ENCODE measurements at regions of chr6 and their contacts with region 1.

Region 1: GRCh38 chr6:33454009-33454946 is at the start of gene ZBTB9:
- DNase-seq: peak; percentile 99
- H3K4me3 Mint-ChIP-seq: peak within 1 kb of the TSS; percentile 97
- H3K27ac Mint-ChIP-seq: peak within 1 kb of the TSS; percentile 88
- H3K4me1 Mint-ChIP-seq: peaks cover 20% of the 10 kb centered on the region
- H3K27me3 Mint-ChIP-seq: no peaks in the 10 kb centered on the region
- total RNA-seq, gene ZBTB9: 14.2 and 14.5 TPM in 2 replicates

Region 2: DNA sequence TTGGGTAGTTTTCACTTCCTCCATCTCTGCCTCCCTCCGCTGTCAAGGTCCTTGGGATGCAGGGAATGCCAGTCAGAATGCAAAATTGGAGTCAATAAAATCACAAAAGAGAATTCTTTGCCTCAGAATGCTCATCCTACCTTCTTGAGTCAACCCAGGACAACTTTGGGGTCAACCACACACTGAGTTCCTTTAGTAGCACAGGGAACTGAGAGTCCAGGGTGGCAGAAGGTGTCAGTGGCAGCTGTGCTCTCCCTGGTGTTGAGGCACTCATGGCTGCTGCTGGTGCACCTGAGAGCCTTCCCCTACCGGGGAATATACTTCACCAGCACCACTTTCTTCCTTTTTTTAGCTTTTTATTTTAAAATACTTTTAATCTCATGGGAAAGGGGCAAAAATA is 1229.6 kb before region 1 on chr6:
- intact Hi-C with region 1: no loop called
- DNase-seq: no peak
- H3K4me3 Mint-ChIP-seq: no peak overlapping the region
- H3K27ac Mint-ChIP-seq: no peak overlapping the region
- H3K4me1 Mint-ChIP-seq: peaks cover 8% of the 10 kb centered on the region
- H3K27me3 Mint-ChIP-seq: peaks cover 1% of the 10 kb centered on the region

Region 3: GRCh38 chr6:33391278-33391921 is 62.9 kb before region 1 on chr6 and contains the start of gene KIFC1:
- intact Hi-C with region 1: loop called (anchors 1 kb)
- DNase-seq: peak; percentile 100
- H3K4me3 Mint-ChIP-seq: peak within 1 kb of the TSS; percentile 89
- H3K27ac Mint-ChIP-seq: peak within 1 kb of the TSS; percentile 97
- H3K4me1 Mint-ChIP-seq: peaks cover 42% of the 10 kb centered on the region
- H3K27me3 Mint-ChIP-seq: peaks cover 2% of the 10 kb centered on the region
- total RNA-seq, gene KIFC1: 64.9 and 66.5 TPM in 2 replicates

Region 4: DNA sequence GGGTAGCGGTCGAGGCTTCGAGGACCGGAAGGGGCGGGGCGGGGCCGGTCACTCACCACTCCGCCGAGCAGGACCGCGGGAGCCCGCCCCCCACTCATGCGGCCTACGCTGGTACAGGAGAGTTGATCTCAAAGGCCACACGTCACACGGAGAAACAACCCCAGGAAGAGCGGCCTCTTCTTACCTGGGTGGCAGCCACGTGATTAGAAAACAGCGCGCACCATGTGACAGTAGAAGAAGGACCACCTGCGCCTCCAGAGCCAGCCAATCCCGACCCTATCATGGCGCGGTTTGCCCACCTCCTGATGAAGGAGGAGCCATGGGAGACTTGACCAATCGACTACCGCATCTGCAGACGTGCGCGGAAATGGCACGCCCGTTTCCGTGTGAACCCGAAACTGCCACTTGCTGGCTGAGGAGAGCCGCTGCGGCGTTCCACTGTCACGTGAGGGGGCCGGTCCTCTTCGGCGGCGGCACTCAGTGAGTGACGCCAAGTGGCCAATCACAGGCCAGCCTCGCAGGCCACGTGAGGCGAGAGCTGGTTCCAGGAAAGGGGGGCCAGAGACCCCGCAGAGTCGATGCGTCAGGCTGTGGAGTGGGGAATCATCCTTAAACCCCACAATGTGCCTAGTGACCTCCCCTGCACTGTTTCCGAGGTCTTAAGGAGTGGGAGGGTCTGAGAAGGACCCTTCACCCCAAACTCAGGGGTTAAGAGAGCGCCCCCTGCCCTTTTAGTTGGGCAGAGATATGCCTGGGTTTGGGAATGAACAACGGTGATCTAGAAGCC is 36.2 kb before region 1 on chr6 and contains the start of gene CUTA:
- intact Hi-C with region 1: loop called (anchors 2 kb)
- DNase-seq: peak; percentile 100
- H3K4me3 Mint-ChIP-seq: peak within 1 kb of the TSS; percentile 92
- H3K27ac Mint-ChIP-seq: peak within 1 kb of the TSS; percentile 96
- H3K4me1 Mint-ChIP-seq: peaks cover 63% of the 10 kb centered on the region
- H3K27me3 Mint-ChIP-seq: peaks cover 1% of the 10 kb centered on the region
- total RNA-seq, gene CUTA: 120 and 124 TPM in 2 replicates

Region 5: GRCh38 chr6:33430991-33431879 is 23.0 kb before region 1 on chr6:
- intact Hi-C with region 1: loop called (anchors 1 kb)
- DNase-seq: peak; percentile 95
- H3K4me3 Mint-ChIP-seq: peak overlapping the region; percentile 90
- H3K27ac Mint-ChIP-seq: peak overlapping the region; percentile 74
- H3K4me1 Mint-ChIP-seq: peaks cover 58% of the 10 kb centered on the region
- H3K27me3 Mint-ChIP-seq: no peaks in the 10 kb centered on the region

Region 6: GRCh38 chr6:33508935-33509926 is 55.0 kb after region 1 on chr6:
- intact Hi-C with region 1: no loop called
- DNase-seq: no peak
- H3K4me3 Mint-ChIP-seq: no peak overlapping the region
- H3K27ac Mint-ChIP-seq: no peak overlapping the region
- H3K4me1 Mint-ChIP-seq: peaks cover 10% of the 10 kb centered on the region
- H3K27me3 Mint-ChIP-seq: peaks cover 12% of the 10 kb centered on the region

Region 7: DNA sequence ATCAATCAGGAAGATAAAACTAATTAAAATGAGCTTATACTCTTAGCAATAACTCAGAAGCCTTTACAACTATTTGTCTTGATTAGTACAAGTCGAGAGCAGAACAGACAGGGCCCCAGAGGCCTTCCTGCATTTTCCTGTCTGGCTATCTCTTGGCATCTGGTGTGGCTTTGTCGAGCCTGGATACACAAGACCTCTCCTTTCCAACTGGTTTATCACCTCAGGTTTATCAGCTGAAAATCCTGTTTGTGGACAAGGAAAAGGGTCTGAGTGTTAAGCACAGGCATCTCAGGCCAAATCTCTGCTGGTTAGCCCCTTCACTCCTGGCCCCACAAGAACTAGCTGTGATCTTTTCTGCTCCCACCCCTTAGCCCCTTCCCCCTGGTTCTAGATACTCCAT is 93.2 kb after region 1 on chr6:
- intact Hi-C with region 1: no loop called
- DNase-seq: no peak
- H3K4me3 Mint-ChIP-seq: peak overlapping the region; percentile 37
- H3K27ac Mint-ChIP-seq: peak overlapping the region; percentile 61
- H3K4me1 Mint-ChIP-seq: peaks cover 15% of the 10 kb centered on the region
- H3K27me3 Mint-ChIP-seq: no peaks in the 10 kb centered on the region

Region 8: DNA sequence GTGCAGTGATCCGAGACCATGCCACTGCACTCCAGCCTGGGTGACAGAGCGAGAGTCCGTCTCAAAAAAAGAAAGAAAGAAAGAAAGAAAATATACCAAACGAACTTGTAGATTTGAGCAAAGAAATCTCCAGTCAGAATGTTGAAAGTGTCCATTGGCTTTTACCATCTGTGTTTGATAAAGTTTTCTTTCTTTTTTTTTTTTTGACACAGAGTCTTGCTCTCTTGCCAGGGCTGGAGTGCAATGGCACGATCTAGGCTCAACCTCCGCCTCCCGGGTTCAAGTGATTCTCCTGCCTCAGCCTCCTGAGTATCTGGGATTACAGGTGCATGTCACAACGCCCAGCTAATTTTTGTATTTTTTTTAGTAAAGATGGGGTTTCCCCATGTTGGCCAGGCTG is 104.5 kb after region 1 on chr6:
- intact Hi-C with region 1: no loop called
- DNase-seq: no peak
- H3K4me3 Mint-ChIP-seq: no peak overlapping the region
- H3K27ac Mint-ChIP-seq: no peak overlapping the region
- H3K4me1 Mint-ChIP-seq: peaks cover 7% of the 10 kb centered on the region
- H3K27me3 Mint-ChIP-seq: no peaks in the 10 kb centered on the region

Region 9: DNA sequence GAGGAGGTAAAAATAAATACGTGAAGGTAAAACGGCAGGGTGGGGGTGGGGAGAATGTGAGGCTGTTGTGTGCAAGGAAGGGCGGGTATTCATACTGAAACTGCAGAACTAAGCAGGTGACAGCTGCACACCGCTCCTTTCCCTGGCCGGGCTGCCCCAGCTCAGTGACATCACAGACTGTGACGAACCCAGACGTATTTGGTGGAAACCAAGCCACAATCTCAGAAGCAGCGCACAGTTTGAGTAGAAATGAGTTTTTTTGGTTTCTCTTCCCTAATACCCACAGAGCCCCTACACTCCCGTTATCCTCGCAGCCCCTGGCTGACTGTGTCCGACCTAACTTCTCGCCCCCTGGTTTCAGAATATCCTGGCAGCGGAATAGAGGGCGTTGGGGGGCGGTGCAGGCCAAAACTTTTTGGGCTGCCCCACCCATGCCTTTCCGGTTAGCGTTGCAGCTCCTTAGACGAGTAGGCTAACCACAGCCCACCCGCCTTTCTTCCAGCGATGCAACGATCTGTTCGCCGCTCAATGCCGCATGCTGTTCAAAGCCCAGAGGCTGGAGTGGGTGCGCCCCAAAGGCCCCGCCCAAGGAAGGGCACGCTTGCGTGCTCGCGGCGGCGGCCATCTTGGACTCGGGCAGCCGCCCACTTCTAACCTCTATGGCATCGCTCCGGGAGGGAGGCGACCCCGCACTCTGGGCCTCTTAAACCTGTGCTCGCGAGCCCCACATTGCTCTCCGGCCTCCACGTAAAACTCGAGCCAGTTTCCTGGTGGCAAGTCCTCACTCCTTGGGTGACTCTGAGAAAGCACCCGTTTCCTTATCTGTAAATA is 116.7 kb after region 1 on chr6:
- intact Hi-C with region 1: loop called (anchors 1 kb)
- DNase-seq: peak; percentile 98
- H3K4me3 Mint-ChIP-seq: peak overlapping the region; percentile 86
- H3K27ac Mint-ChIP-seq: peak overlapping the region; percentile 99
- H3K4me1 Mint-ChIP-seq: peaks cover 52% of the 10 kb centered on the region
- H3K27me3 Mint-ChIP-seq: no peaks in the 10 kb centered on the region

Region 10: DNA sequence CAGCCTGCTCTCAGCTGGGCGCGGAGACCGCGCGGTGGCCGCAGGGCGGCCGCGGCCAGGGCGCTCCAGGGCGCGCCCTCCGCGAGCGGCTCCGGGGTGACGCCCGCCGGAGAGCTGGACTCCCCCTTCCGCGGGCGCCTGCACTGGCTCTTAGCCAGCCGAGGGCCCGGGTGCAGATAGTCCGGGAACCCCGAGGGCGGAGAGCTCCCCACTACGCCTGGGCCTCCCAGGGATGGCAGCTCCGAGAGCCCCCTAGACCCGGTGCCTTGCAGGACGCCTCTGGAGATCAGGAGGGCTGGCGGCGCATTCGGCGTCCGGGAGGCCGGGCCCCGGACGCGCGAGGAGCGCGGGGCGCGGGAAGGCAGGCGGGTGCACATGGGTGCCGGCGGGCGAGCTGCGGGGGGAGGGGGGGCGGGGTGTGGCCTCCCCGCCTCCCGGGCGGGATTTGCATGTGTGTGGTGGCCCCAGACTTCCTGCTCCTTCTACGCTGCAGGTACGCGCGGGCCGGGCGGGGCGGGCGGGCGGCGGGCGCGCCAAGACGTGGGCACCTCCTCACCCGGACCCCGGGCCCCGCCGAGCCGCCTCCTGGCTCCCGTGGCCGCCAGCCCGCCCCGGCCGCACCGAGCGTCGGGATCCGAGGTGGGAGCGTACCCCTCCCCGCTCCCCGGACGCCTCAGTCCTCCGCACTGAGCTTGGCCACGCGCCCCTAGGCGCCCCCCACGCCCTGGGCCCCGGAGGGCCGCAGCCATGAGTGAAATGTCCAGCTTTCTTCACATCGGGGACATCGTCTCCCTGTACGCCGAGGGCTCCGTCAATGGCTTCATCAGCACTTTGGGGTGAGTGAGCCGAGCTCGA is 166.8 kb after region 1 on chr6 and contains the start of gene ITPR3:
- intact Hi-C with region 1: loop called (anchors 5 kb)
- DNase-seq: peak; percentile 92
- H3K4me3 Mint-ChIP-seq: peak within 1 kb of the TSS; percentile 96
- H3K27ac Mint-ChIP-seq: peak within 1 kb of the TSS; percentile 91
- H3K4me1 Mint-ChIP-seq: peaks cover 48% of the 10 kb centered on the region
- H3K27me3 Mint-ChIP-seq: no peaks in the 10 kb centered on the region
- total RNA-seq, gene ITPR3: 45.5 and 45.6 TPM in 2 replicates

Region 11: DNA sequence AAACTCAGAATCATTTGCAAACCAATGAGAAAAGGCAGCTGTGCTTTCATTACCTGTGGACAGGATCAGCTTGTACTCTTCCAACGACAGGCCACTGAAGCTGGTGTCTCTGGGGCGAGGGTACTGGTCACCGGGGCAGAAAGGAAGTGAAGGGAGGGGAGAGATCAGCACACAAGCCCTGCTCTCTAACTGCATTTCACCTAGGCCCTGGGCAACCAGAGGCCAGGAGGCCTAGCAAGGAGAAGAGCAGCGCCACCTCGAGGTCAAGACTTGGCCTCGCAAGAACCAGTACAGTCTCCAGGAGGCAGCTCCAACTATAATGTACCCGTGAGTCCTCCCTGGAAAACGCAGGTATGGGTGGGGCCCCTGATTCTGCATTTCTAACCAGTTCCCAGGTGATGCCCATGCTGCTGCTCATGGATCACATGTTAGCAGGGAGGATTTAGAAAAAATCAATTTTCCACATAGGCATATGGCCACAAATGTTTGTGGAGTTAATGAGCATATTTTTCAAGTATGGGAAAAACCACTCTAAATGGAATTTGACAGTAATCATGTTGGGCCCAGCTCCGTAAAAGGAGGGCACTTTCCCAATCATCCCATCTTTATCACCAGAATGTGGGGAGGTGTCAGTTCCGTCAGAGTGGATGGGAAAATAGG is 246.2 kb after region 1 on chr6:
- intact Hi-C with region 1: loop called (anchors 10 kb)
- DNase-seq: peak; percentile 93
- H3K4me3 Mint-ChIP-seq: no peak overlapping the region
- H3K27ac Mint-ChIP-seq: peak overlapping the region; percentile 87
- H3K4me1 Mint-ChIP-seq: peaks cover 38% of the 10 kb centered on the region
- H3K27me3 Mint-ChIP-seq: no peaks in the 10 kb centered on the region

Measured in activated CD4-positive, alpha-beta T cell treated with anti-CD3 and anti-CD28 coated beads, Interleukin-2, amount 10 ng/mL, durations not matched to agents 24 days and 14 days (primary cell).